ENCODE measurements at regions of chr2 and their contacts with region 1.

Region 1: DNA sequence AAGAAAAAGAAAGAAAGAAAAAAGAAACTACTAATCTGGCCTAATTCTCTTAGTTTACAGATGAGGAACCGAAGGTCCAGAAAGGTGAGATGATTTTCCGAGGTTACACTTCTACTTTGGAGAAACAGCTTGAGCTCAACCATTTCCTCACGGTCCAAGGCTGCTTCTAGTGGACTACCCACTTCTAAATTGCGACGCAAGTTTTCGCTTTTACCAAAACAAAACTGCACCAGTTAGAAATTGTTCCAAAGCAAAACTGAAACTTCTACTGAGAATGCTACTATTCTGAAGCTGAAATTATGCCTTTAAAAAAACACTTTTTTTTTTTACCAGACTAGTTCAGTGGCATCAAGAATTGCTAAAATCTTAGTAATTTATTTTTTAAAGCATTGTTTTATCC is 101.6 kb downstream of the INO80D start:
- DNase-seq: no peak
- ATAC-seq: no peak
- H3K4me3 ChIP-seq: no peak overlapping the region
- H3K27ac ChIP-seq: no peak overlapping the region
- H3K4me1 ChIP-seq: no peaks in the 10 kb centered on the region
- H3K27me3 ChIP-seq: no peaks in the 10 kb centered on the region

Region 2: GRCh38 chr2:204415406-204416181 is 1568.8 kb before region 1 on chr2:
- intact Hi-C with region 1: loop called in 1 of 4 experiments (anchors 10 kb)
- DNase-seq: no peak
- ATAC-seq: no peak
- H3K4me3 ChIP-seq: no peak overlapping the region
- H3K27ac ChIP-seq: no peak overlapping the region
- H3K4me1 ChIP-seq: no peaks in the 10 kb centered on the region
- H3K27me3 ChIP-seq: no peaks in the 10 kb centered on the region